ENCODE measurements at regions of chr12 and their contacts with region 1.

Region 1: DNA sequence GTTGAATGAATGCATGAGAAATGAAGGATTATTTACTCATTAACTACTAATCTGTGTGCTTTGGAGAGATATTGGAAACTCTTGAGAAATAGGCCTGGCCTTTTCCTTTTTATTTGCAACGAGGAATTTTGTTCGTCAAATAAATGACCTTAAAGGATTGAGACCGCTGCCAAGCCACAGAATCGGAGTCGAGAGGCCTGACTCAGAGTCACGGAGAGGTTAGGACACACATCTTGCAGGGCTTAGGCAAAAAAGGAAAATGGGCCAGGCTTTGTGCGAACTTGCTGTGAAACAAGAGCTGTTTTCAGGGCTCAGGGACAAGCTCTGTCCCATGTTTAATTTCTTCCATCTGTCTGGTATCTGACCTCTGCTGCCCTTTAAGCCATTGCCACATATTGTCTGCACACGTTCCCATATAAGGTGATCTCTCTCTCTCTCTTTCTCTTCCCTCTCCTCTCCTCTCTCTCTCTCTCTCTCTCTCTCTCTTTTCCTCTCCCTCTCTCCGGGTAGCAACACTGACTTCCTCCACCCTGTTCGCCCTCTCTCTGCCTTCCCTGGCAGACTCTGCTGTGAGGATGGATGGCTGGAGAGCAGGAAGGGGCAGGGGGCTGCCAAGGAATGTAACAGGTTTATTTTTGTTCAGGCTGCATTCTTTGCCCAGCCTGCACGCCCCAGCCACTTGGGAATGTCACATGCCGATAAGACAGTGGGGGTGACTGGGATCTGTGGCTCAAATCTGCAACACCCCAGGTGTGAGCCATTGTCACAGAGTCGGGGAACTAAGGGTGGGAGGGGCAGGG is 14.9 kb upstream of the IFT81 start:
- DNase-seq: peak in 1 of 2 donors; percentile 99
- H3K4me3 ChIP-seq: peak overlapping the region in 1 of 2 donors; percentile 16
- H3K27ac ChIP-seq: peak overlapping the region; percentile 88
- H3K4me1 ChIP-seq: peaks cover 59% of the 10 kb centered on the region
- H3K27me3 ChIP-seq: no peaks in the 10 kb centered on the region
- CTCF ChIP-seq: peak in 1 of 3 experiments; percentile 71
- POLR2A ChIP-seq: peak in 1 of 2 donors; percentile 28

Region 2: DNA sequence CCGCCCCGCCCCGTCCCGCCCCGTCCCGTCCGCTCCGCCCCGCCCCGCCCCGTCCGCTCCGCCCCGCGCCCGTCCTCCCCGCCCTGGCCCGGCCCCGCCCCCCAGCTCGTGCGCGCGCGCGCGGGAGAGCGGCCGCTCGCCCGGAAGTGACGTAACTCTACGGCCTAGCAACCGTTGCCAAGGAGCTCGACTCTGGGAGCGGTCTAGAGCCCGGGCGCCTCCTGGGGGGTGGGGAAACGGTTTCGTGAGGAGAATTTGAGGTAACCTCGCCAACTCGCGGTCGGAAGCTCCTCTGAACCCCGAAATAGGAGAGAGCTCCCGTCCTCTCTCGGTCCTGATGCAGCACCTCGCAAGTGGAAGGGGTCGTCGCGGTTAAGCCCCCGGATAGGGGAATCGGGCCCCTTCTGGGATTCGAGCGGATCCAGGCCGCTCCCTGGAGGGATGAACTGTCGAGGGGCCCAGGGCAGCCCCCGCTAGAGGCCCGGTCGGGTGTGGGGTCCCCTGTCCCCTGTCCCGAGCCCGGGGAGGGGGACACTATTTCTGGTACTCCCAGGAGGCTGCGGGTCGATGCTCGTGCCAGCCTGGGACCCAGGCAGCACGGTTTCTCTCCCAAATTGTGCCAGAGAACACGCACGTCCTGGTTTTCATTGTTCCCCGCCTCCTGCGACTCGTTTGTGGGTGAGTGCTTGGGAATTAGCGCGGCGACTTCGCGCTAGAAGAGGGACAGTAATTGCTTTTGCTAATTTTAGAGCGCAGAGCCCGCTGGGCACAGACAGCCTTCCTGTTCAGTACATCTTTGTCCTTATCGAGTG is 15.2 kb after region 1 on chr12 and contains the start of gene IFT81:
- intact Hi-C with region 1: loop called (anchors 2 kb)
- DNase-seq: peak in 1 of 2 donors; percentile 94
- H3K4me3 ChIP-seq: peak within 1 kb of the TSS; percentile 70 to 92
- H3K27ac ChIP-seq: peak within 1 kb of the TSS; percentile 85
- H3K4me1 ChIP-seq: peaks cover 41% of the 10 kb centered on the region
- H3K27me3 ChIP-seq: no peaks in the 10 kb centered on the region
- CTCF ChIP-seq: no peak
- POLR2A ChIP-seq: peak in 1 of 2 donors; percentile 71
- total RNA-seq, gene IFT81: 18.2 TPM

Region 3: DNA sequence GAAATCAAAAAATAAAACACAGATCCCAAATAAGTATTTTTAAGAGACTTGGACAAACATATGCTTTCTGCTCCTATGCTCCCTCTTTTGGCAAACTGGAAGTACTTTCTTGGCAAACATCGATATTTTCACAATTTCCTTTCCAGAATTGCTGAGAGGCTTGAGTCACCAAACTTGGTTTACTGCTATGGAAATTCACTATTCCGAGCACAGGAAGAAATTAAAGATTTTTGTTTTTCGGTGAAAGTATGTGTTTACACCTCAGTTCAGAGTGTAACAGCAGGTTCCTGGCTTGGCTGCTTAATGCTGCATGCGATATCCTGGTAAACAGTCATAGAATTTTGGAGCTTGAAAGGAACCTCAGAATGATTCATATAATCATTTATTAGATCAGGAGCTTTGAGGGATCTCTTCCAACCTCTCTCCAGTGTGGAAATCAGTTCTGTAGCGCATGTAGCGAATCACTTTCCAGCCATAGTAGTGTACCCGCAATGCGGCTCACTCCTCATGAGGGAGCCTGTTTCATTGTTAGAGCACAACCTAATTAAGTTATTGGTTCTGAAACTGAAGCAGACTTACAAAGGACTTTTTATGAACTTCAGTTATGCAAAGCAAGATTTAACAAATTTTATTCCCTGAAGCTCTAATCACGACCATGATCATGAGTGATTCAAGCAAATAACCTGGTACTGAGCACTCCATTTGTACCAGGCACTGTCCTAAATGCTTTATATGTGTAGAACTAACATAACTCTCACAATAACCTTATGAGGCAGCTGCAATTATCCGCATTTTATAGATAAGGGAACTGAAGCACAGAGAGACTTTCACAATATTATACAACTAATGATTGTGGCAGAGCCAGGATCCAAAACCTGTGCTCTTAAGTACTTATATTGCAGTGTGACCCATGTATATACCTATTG is 115.4 kb after region 1 on chr12:
- intact Hi-C with region 1: loop called (anchors 5 kb)
- DNase-seq: no peak
- H3K4me3 ChIP-seq: peak overlapping the region; percentile 28 to 32
- H3K27ac ChIP-seq: peak overlapping the region; percentile 77
- H3K4me1 ChIP-seq: peaks cover 29% of the 10 kb centered on the region
- H3K27me3 ChIP-seq: no peaks in the 10 kb centered on the region
- CTCF ChIP-seq: peak in 1 of 3 experiments; percentile 53
- POLR2A ChIP-seq: no peak

Region 4: GRCh38 chr12:110280779-110281548 is 171.7 kb after region 1 on chr12 and contains the start of gene ATP2A2:
- intact Hi-C with region 1: loop called (anchors 5 kb)
- DNase-seq: no peak
- H3K4me3 ChIP-seq: peak within 1 kb of the TSS; percentile 80 to 98
- H3K27ac ChIP-seq: peak within 1 kb of the TSS; percentile 97
- H3K4me1 ChIP-seq: peaks cover 44% of the 10 kb centered on the region
- H3K27me3 ChIP-seq: no peaks in the 10 kb centered on the region
- CTCF ChIP-seq: no peak
- POLR2A ChIP-seq: peak in 1 of 2 donors; percentile 78
- total RNA-seq, gene ATP2A2: 127 TPM